ENCODE measurements at regions of chr10 and their contacts with region 1.

Region 1: DNA sequence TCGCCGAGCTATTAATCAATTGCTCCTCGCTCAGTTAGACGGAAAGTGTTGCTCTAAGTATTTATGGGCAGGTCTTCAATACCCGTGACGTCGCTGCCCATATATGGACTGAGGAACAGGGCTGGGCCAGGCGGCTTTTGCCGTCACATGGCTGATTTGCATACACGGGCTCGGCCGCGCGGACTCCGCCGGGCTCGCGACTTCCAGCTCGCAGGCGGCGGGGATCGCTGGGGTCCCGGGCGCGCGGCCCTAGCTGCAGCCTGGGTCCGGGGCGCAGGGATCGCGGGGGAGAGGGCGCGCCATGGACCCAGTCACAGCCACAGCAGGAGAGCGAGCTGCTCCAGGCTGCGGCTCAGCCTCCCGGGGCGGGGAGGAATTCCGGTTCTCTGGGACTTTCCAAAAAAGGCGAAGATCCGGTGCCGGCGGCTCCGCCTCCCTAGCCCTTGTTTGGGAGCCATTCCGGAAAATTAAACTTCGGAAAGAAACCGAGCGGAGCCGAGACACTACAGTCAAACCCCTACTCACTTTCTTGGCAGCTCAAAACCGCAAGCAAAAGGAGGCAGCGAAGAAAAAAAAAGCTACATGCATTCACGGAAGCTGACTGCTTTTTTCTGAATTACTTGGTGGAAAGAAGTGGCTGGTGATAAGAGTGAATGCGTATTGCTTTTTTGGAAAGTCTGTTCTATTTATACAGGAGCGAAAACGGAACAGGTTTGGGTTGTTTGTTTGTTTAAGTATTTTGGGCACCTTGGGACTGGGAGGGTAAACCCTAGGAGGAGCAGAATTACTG is at the start of gene EGR2:
- DNase-seq: peak; percentile 97
- H3K4me3 Mint-ChIP-seq: peak within 1 kb of the TSS; percentile 88
- H3K27ac Mint-ChIP-seq: peak within 1 kb of the TSS; percentile 100
- H3K4me1 Mint-ChIP-seq: peaks cover 40% of the 10 kb centered on the region
- H3K27me3 Mint-ChIP-seq: peaks cover 21% of the 10 kb centered on the region
- total RNA-seq, gene EGR2: 66.9 to 68.2 TPM

Region 2: GRCh38 chr10:61903221-61903927 is 913.2 kb before region 1 on chr10:
- CTCF ChIA-PET with region 1: no interaction called
- POLR2A ChIA-PET with region 1: no interaction called
- intact Hi-C with region 1: loop called (anchors 5 kb)
- DNase-seq: peak; percentile 84
- H3K4me3 Mint-ChIP-seq: peak overlapping the region; percentile 90
- H3K27ac Mint-ChIP-seq: peak overlapping the region; percentile 95
- H3K4me1 Mint-ChIP-seq: peaks cover 45% of the 10 kb centered on the region
- H3K27me3 Mint-ChIP-seq: no peaks in the 10 kb centered on the region

Region 3: DNA sequence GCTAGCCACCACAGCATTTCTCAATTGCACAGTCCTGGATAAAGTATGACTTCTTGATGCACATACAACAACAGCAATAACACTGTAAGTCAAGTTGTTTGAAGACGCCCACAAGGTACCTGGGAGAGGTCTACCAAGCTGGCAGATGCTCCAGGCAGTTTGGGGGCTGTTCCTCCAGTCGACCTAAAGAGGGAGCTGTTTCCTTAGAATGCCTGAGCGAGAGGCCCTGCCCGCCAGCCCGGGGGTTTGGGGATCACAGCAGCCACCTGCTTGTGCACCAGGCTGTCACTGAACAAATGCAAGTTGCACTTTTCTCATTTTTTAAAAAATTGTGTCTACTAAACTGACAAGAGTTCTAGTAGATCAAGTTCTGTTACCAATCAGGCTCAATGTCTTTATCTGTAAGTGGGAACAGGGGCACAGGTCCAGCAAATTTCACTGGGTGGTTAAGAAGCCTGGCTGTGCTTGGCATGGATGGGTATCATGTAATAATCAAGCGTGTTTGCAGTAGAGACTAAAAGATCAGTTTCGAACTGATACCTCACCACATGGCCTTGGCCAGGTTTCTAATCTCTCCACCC is 205.8 kb before region 1 on chr10:
- CTCF ChIA-PET with region 1: interaction called, 139 read pairs
- POLR2A ChIA-PET with region 1: interaction called, 6 read pairs
- intact Hi-C with region 1: loop called (anchors 1 kb)
- DNase-seq: peak; percentile 85
- H3K4me3 Mint-ChIP-seq: no peak overlapping the region
- H3K27ac Mint-ChIP-seq: no peak overlapping the region
- H3K4me1 Mint-ChIP-seq: peaks cover 37% of the 10 kb centered on the region
- H3K27me3 Mint-ChIP-seq: peaks cover 5% of the 10 kb centered on the region

Region 4: GRCh38 chr10:62732841-62733653 is 83.5 kb before region 1 on chr10:
- CTCF ChIA-PET with region 1: interaction called, 16 read pairs
- POLR2A ChIA-PET with region 1: interaction called, 17 read pairs
- intact Hi-C with region 1: loop called (anchors 1 kb)
- DNase-seq: peak; percentile 71
- H3K4me3 Mint-ChIP-seq: no peak overlapping the region
- H3K27ac Mint-ChIP-seq: no peak overlapping the region
- H3K4me1 Mint-ChIP-seq: peaks cover 19% of the 10 kb centered on the region
- H3K27me3 Mint-ChIP-seq: peaks cover 3% of the 10 kb centered on the region

Region 5: GRCh38 chr10:62788861-62789467 is 27.6 kb before region 1 on chr10:
- CTCF ChIA-PET with region 1: no interaction called
- POLR2A ChIA-PET with region 1: no interaction called
- intact Hi-C with region 1: no loop called
- DNase-seq: no peak
- H3K4me3 Mint-ChIP-seq: no peak overlapping the region
- H3K27ac Mint-ChIP-seq: no peak overlapping the region
- H3K4me1 Mint-ChIP-seq: no peaks in the 10 kb centered on the region
- H3K27me3 Mint-ChIP-seq: peaks cover 5% of the 10 kb centered on the region

Region 6: GRCh38 chr10:62851442-62851841 is 34.9 kb after region 1 on chr10:
- CTCF ChIA-PET with region 1: interaction called, 33 read pairs
- POLR2A ChIA-PET with region 1: interaction called, 21 read pairs
- intact Hi-C with region 1: loop called (anchors 1 kb)
- DNase-seq: peak; percentile 55
- H3K4me3 Mint-ChIP-seq: no peak overlapping the region
- H3K27ac Mint-ChIP-seq: no peak overlapping the region
- H3K4me1 Mint-ChIP-seq: peaks cover 46% of the 10 kb centered on the region
- H3K27me3 Mint-ChIP-seq: peaks cover 8% of the 10 kb centered on the region

Region 7: DNA sequence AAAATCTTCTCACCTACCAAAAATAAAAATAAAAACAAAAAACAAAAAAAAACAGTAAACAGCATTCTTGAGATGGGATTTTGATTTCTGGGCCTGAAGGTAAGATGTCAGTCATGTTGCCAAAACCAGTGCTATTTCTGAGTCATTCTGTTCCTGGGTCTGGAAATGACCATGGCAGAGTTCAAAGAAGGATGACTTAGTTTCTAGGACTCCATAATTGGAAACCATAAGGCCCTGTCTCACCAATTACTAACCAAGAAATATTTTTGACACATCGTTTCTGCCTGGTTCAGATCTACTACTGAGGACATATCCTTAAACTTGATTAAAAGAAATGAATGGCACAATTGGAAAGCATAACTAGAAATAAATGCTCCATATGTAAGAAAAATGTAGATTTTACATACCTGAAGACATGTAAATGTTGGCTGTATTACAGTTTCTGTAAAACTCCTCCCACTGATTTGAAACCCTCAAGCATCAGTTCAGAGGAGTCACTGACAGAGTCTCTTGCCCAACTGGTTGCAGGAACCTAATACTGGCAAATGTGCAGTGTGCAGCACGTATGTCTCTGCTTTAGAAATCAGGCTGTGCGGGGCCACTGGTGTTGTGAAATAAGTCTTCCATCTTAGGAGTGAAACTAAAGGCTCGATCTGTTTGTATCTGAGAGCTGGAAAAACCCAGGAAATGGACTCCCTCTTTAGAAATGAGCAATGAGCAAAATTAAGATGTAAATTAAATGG is 84.5 kb after region 1 on chr10:
- CTCF ChIA-PET with region 1: no interaction called
- POLR2A ChIA-PET with region 1: no interaction called
- intact Hi-C with region 1: no loop called
- DNase-seq: no peak
- H3K4me3 Mint-ChIP-seq: no peak overlapping the region
- H3K27ac Mint-ChIP-seq: peak overlapping the region; percentile 7
- H3K4me1 Mint-ChIP-seq: peaks cover 4% of the 10 kb centered on the region
- H3K27me3 Mint-ChIP-seq: peaks cover 2% of the 10 kb centered on the region

Region 8: DNA sequence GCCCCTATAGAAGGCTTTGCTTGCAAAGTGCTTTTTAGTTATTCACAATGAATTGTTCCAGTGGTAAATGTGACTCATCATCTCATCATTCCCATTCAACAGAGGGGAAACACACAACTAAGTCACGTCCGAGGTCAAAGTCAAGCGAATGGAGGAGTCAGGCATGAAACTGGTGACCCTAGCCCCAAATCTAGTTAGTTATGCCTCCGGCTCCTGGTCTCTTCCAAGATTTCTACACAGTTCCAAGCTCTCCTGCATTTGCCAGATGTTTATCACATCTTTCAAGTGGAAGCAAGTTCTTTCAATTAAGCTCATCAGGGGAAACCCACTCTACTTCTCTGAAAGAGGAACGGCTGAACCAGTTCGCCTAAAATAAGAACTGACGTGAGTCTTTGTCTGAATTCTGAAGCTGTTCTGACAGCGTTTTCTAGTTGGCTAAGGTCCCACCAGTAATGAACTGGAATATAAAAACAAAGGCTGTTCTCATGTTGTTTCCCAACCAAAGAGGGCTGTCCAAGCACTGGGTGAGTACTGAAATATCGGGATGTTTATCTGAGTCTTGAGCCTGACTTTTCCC is 175.7 kb after region 1 on chr10:
- CTCF ChIA-PET with region 1: no interaction called
- POLR2A ChIA-PET with region 1: interaction called, 9 read pairs
- intact Hi-C with region 1: loop called (anchors 1 kb)
- DNase-seq: peak; percentile 20
- H3K4me3 Mint-ChIP-seq: peak overlapping the region; percentile 24
- H3K27ac Mint-ChIP-seq: peak overlapping the region; percentile 84
- H3K4me1 Mint-ChIP-seq: peaks cover 54% of the 10 kb centered on the region
- H3K27me3 Mint-ChIP-seq: peaks cover 7% of the 10 kb centered on the region

Region 9: GRCh38 chr10:63268798-63269503 is 452.4 kb after region 1 on chr10:
- CTCF ChIA-PET with region 1: no interaction called
- POLR2A ChIA-PET with region 1: interaction called, 4 read pairs
- intact Hi-C with region 1: loop called (anchors 1 kb)
- DNase-seq: peak; percentile 89
- H3K4me3 Mint-ChIP-seq: peak overlapping the region; percentile 97
- H3K27ac Mint-ChIP-seq: peak overlapping the region; percentile 97
- H3K4me1 Mint-ChIP-seq: peaks cover 24% of the 10 kb centered on the region
- H3K27me3 Mint-ChIP-seq: no peaks in the 10 kb centered on the region

Measured in activated CD4-positive, alpha-beta memory T cell treated with anti-CD3 and anti-CD28 coated beads for 36 hours (primary cell).